HEK293 (cell line): ENCODE measurements at regions of chr14 and their contacts with region 1.

Region 1: DNA sequence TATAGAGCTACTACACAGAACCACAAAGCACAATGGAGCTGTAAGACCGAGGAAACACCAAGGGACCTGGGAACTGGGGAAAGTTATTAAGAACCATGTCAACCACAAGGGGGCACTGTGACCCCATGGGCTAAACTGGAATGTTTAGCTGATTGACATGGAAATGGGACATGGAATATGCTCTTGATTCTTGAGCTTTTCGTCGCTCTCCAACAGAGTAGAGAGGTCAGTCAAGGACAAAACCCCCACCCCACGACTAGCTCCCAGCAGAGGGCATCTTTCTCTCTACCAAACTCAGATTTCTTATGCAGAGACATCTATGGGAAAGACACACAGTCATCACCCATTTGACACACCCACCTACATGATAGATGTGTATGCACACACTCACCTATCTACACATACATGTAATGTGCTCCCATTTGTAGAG is 10.1 kb downstream of the NDRG2 start:
- H3K4me3 ChIP-seq: no peak overlapping the region
- H3K27ac ChIP-seq: no peak overlapping the region
- H3K4me1 ChIP-seq: no peaks in the 10 kb centered on the region
- CTCF ChIP-seq: peak; percentile 91

Region 2: DNA sequence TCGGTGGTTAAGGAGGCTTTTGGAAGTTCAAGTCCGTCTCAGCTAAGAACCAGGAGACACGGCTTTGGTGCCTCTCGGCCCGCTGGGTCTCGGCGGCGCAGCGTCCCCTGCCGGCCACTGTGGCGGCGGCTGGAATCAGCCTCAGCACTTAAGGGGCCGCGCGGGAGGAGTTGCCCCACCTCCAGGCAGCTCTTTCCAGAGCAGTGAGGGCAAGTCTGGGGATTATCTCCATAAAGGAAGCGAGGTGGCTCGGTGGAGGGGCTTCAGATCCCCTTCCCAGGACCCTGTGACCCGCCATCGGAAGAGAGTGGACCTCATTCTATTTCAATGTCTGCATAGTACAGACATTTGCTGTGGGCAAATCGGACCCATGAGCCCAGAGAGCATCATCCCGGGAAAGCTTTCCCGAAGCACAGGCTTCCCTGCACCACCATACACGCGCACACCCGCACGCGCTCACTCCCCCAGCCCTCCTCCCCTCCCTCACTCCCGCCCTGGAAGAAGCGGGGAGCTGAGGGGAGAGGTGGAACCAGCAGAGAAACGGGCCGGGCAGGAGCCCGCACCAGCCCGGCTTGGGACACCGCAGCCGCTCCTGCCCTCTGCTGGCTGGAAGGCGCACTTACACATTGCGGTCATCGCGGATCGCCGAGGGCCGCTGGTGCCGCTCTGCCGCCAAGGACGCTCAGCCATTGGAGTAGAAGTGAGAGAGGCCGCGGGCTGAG is 43.6 kb before region 1 on chr14:
- CTCF ChIA-PET with region 1: interaction called, 21 read pairs
- POLR2A ChIA-PET with region 1: interaction called, 3 read pairs
- H3K4me3 ChIP-seq: peak overlapping the region; percentile 70
- H3K27ac ChIP-seq: peak overlapping the region; percentile 45; the same call in 1 of the 2 replicates
- H3K4me1 ChIP-seq: no peaks in the 10 kb centered on the region
- CTCF ChIP-seq: peak; percentile 84

Region 3: GRCh38 chr14:21003788-21004346 is 10.9 kb before region 1 on chr14:
- CTCF ChIA-PET with region 1: interaction called, 43 read pairs
- POLR2A ChIA-PET with region 1: interaction called, 3 read pairs
- H3K4me3 ChIP-seq: no peak overlapping the region
- H3K27ac ChIP-seq: no peak overlapping the region
- H3K4me1 ChIP-seq: no peaks in the 10 kb centered on the region
- CTCF ChIP-seq: no peak

Region 4: GRCh38 chr14:21032326-21033132 is 17.8 kb after region 1 on chr14:
- CTCF ChIA-PET with region 1: interaction called, 35 read pairs
- POLR2A ChIA-PET with region 1: interaction called, 3 read pairs
- H3K4me3 ChIP-seq: no peak overlapping the region
- H3K27ac ChIP-seq: no peak overlapping the region
- H3K4me1 ChIP-seq: no peaks in the 10 kb centered on the region
- CTCF ChIP-seq: no peak

Region 5: DNA sequence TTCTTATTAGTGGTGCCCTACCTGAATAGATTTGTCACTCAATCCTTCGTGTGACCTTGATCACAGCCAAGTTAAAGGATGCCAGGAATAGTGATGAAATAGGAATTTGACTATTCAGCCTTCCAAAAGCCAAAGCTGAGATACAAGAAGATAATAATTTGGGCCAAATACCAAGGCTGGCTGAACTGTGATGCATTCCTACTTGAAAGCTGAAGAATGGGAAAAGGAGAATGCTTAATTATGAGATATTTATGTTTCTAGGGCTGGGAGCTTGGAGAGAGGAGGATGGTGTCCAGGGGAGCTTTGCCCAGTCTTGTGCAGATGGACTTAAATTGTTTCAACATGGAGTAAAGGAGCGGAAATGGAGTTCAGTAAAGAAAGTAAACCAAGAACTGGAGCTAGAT is 32.6 kb after region 1 on chr14:
- CTCF ChIA-PET with region 1: interaction called, 206 read pairs
- POLR2A ChIA-PET with region 1: no interaction called
- H3K4me3 ChIP-seq: no peak overlapping the region
- H3K27ac ChIP-seq: no peak overlapping the region
- H3K4me1 ChIP-seq: no peaks in the 10 kb centered on the region
- CTCF ChIP-seq: no peak

Region 6: GRCh38 chr14:21071225-21072030 is 56.7 kb after region 1 on chr14:
- CTCF ChIA-PET with region 1: interaction called, 49 read pairs
- POLR2A ChIA-PET with region 1: interaction called, 19 read pairs
- H3K4me3 ChIP-seq: peak overlapping the region; percentile 79
- H3K27ac ChIP-seq: peak overlapping the region; percentile 86
- H3K4me1 ChIP-seq: peaks cover 16% of the 10 kb centered on the region
- CTCF ChIP-seq: no peak

Region 7: GRCh38 chr14:21103710-21104447 is 89.1 kb after region 1 on chr14:
- CTCF ChIA-PET with region 1: interaction called, 164 read pairs
- POLR2A ChIA-PET with region 1: interaction called, 15 read pairs
- H3K4me3 ChIP-seq: peak overlapping the region; percentile 49
- H3K27ac ChIP-seq: peak overlapping the region; percentile 99
- H3K4me1 ChIP-seq: peaks cover 25% of the 10 kb centered on the region
- CTCF ChIP-seq: peak; percentile 95

Region 8: DNA sequence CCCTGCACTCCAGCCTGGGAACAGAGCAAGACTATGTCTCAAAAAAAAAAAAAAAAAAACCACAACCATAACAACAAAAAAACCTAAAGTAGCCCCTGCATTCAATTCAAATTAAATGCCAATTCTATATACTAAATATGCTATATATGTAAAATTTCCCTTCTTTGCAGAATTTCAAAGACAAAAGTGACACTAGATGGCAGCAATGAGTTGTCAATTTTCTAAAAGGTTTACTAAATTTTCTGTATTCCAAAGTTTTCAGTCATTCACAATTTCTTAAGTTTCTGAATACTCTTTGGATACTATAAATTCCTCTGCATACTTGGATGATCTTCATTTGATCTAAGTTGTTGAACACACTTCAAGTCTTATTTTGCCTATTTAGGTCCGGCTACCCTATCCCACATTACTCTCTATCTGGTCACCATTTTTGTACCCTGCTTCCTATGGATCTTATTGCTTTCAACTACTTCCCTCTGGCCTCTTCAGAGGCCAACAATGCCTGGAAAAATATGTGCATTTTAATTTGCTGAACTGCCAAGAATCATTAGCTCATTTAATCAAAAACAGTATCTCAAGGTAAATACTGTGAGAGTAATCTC is 226.5 kb after region 1 on chr14:
- CTCF ChIA-PET with region 1: no interaction called
- POLR2A ChIA-PET with region 1: no interaction called
- H3K4me3 ChIP-seq: no peak overlapping the region
- H3K27ac ChIP-seq: no peak overlapping the region
- H3K4me1 ChIP-seq: peaks cover 3% of the 10 kb centered on the region; the same call in 1 of the 2 replicates
- CTCF ChIP-seq: no peak

Region 9: DNA sequence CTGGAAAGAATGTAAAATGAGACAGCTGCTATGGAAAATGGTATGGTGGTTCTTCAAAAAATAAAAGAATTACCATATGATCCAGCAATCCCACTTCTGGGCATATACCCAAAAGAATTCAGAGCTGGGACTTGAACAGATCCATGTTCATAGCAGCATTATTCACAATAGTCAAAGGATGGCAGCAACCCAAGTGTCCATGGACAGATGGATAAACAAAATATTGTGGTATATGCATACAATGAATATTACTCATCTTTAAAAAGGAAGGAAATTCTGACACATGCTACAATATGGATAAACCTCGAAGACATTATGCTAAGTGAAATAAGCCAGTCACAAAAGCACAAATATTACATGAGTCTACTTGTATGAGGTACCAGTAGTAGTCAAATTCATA is 452.8 kb after region 1 on chr14:
- CTCF ChIA-PET with region 1: no interaction called
- POLR2A ChIA-PET with region 1: no interaction called
- H3K4me3 ChIP-seq: no peak overlapping the region
- H3K27ac ChIP-seq: no peak overlapping the region
- H3K4me1 ChIP-seq: no peaks in the 10 kb centered on the region
- CTCF ChIP-seq: no peak